Mammary epithelial cell (primary cell): ENCODE measurements at regions of chr11 and their contacts with region 1.

Region 1: DNA sequence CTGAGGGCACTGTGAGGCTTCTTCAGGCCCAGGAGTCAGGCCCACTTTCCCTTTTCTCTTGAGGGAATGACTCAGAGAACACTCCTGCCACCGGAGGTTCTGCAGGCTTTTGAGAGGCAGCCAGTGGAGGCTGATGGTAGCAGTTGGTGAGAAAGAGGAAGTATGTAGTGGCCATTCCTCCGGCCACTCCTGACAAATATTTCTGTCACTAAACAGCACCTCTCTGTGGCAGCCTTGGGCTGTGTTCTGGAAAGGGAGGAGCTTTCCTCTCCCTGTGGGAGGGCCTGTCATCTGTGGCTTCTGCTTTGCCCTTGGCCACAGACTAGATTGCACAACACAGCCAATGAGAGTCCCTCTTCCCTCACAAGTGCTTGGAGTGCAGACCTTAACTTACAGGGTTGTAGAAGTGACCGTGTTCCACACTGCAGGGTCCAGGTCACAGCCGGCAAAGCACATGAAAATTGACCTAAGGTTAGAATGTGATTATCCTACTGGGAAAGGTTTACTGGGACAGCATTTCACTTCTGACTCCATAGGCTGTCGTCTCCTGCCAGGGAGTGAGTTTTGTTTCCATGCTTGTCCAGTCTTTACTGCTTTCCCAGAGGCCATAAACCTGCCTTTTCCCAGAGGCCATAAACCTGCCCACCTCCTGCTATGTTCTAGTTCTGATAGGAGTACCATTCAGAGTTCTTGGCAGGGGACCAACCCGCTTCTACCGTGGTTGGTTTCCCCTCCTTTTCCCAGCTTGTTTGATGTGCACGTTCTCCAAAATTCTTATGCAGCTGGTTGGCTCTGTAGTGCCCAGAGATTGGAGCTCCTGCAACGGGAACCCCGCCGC is 33.3 kb downstream of the MARK2 start:
- DNase-seq: peak; percentile 93
- H3K4me3 ChIP-seq: no peak overlapping the region
- H3K27ac ChIP-seq: no peak overlapping the region
- H3K4me1 ChIP-seq: peaks cover 38% of the 10 kb centered on the region
- H3K27me3 ChIP-seq: no peaks in the 10 kb centered on the region
- CTCF ChIP-seq: peak in 1 of 2 donors; percentile 49

Region 2: DNA sequence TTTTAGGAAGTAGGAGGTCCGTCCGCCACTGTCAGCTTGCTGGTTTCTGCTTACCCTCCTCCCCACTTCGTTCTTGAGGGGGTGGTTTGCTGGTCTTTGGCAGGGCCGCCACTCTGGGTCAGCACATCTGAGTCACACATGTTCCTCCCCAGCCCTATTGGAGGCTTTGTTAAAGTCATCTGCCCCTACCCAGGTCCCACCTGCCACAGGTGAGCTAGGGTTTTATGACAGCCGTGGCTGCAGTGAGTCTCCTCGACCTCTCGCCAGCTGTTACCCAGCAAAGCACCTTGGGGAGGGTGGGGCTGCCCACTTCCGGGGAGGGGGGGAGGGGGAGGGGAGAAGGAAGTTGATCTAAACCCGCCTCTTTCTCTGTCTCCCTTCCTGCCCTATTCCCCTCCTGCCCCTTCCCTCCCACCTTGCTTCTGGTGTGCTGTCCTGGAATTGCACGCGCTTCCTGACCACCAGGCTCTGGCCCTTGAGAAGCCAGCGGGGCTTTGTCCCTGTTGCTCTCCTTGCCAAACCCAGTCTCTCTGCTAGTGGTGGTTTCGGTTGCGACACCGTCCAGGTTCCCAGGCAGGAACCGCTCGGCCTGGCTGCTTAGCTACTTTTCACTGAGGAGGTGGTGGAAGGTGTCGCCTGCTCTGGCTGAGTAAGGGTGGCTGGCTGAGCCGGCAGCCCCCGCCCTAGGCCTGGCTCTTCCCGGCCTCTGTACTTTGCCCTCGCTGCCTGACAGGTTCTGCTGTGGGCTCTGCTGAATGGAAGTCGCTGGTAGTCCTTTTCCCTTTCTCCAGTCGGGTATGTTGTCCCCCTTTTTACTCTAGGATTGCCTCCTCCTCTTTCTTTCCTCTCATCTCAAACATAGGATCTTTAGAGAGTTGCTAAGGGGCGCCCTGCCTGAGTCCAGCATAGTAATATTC is 16.2 kb after region 1 on chr11:
- CTCF ChIA-PET with region 1: interaction called, 18 read pairs
- dilution Hi-C with region 1: no loop called
- in situ Hi-C with region 1: no loop called
- intact Hi-C with region 1: loop called (anchors 2 kb)
- DNase-seq: peak; percentile 87
- H3K4me3 ChIP-seq: peak overlapping the region; percentile 47 to 53 (median 53)
- H3K27ac ChIP-seq: peak overlapping the region; percentile 85
- H3K4me1 ChIP-seq: peaks cover 34% of the 10 kb centered on the region
- H3K27me3 ChIP-seq: no peaks in the 10 kb centered on the region
- CTCF ChIP-seq: no peak

Region 3: GRCh38 chr11:63896071-63896470 is 23.9 kb after region 1 on chr11:
- CTCF ChIA-PET with region 1: interaction called, 18 read pairs
- dilution Hi-C with region 1: no loop called
- in situ Hi-C with region 1: no loop called
- intact Hi-C with region 1: no loop called
- DNase-seq: no peak
- H3K4me3 ChIP-seq: no peak overlapping the region
- H3K27ac ChIP-seq: no peak overlapping the region
- H3K4me1 ChIP-seq: no peaks in the 10 kb centered on the region
- H3K27me3 ChIP-seq: no peaks in the 10 kb centered on the region
- CTCF ChIP-seq: no peak